Mammary epithelial cell (primary cell): ENCODE measurements at regions of chr4 and their contacts with region 1.

Region 1: DNA sequence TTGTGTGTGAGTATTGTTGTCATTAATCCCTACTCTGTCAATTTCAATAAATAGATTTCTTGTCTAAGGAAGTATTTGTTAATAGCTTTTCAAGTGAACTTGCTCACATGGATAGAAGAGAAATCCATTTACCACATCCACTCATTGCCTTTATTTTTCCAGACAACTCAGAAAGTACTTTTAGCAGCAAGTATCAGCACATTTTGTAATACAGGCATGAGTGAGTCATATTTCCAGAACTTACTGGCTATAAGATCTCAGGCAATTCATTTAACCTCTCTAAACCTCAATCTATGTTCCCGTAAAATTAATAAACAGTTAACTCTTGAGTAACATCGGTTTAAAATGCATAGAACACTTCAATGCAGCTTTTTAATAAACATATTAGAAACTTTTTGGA is 317.9 kb upstream of the PCDH7 start:
- DNase-seq: peak; percentile 8
- H3K4me3 ChIP-seq: no peak overlapping the region
- H3K27ac ChIP-seq: no peak overlapping the region
- H3K4me1 ChIP-seq: no peaks in the 10 kb centered on the region
- H3K27me3 ChIP-seq: no peaks in the 10 kb centered on the region
- CTCF ChIP-seq: no peak

Region 2: DNA sequence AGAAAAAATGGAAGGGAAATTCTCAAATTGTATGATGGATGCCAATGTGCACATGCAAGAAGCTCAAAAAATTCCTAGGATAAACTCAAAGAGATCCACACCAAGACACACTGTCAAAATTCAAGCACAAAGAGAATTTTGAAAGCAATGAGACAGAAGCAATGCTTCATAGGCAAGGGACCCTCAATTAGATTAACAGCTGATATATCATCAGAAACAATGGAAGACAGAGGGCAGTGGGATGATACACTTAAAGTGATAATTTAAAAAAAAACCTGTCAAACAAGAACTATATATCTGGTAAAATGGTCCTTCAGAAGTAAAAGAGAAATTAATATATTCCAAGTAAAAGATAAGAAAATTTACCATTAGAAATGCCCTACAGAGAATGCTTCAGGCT is 11.6 kb after region 1 on chr4:
- CTCF ChIA-PET with region 1: no interaction called
- dilution Hi-C with region 1: no loop called
- in situ Hi-C with region 1: no loop called
- intact Hi-C with region 1: no loop called
- DNase-seq: no peak
- H3K4me3 ChIP-seq: no peak overlapping the region
- H3K27ac ChIP-seq: no peak overlapping the region
- H3K4me1 ChIP-seq: no peaks in the 10 kb centered on the region
- H3K27me3 ChIP-seq: no peaks in the 10 kb centered on the region
- CTCF ChIP-seq: no peak

Region 3: GRCh38 chr4:30461218-30461617 is 58.9 kb after region 1 on chr4:
- CTCF ChIA-PET with region 1: no interaction called
- dilution Hi-C with region 1: no loop called
- in situ Hi-C with region 1: no loop called
- intact Hi-C with region 1: loop called (anchors 10 kb)
- DNase-seq: no peak
- H3K4me3 ChIP-seq: no peak overlapping the region
- H3K27ac ChIP-seq: no peak overlapping the region
- H3K4me1 ChIP-seq: no peaks in the 10 kb centered on the region
- H3K27me3 ChIP-seq: no peaks in the 10 kb centered on the region
- CTCF ChIP-seq: no peak

Region 4: GRCh38 chr4:30553706-30554105 is 151.4 kb after region 1 on chr4:
- CTCF ChIA-PET with region 1: no interaction called
- dilution Hi-C with region 1: no loop called
- in situ Hi-C with region 1: no loop called
- intact Hi-C with region 1: no loop called
- DNase-seq: no peak
- H3K4me3 ChIP-seq: no peak overlapping the region
- H3K27ac ChIP-seq: no peak overlapping the region
- H3K4me1 ChIP-seq: no peaks in the 10 kb centered on the region
- H3K27me3 ChIP-seq: no peaks in the 10 kb centered on the region
- CTCF ChIP-seq: no peak